ENCODE measurements at regions of chr12 and their contacts with region 1.

Region 1: GRCh38 chr12:54993161-54993835 is 8.7 kb upstream of the TESPA1 start:
- DNase-seq: no peak
- ATAC-seq: peak; percentile 61

Region 2: GRCh38 chr12:55034218-55034617 is 40.9 kb after region 1 on chr12:
- intact Hi-C with region 1: no loop called
- DNase-seq: no peak
- ATAC-seq: no peak

Region 3: DNA sequence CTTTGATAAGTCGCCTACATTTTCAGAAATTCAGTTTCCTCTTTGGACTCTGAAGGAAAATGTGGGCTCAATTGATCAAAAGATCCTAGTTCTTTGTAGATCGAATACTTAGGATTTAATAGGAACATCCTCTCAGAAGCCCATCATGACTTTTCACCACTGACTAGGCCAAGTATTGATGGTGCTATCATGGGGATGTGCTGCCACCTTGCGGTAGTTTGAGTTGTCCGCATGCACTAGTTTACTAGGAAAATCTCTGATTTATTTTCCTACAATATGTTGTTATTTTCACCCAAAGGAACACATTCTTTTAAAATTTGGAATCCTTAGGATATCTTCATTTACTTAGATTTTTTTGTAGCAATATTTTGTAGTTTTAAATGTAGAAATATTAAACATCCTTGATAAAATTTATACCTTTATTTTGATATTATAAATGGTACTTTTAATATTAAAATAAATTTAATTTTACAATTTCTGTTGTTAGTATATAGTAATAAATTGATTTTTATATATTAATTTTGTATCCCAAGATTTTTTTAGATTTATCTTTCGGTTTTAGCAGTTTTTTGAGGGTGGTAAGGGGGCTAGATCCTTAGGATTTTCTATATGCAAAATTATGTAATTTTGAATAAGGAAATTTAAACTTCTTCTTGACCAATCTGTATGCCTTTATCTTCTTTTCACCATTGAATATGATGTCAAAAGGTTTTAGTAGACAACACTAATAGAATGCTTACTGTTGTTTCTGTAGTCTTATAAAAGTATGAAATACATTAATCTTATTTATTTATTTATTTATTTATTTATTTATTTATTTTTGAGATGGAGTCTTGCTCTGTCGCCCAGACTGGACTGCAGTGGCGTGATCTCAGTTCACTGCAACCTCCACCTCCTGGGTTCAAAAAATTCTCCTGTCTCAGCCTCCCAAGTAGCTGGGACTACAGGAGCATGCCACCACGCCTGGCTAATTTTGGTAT is 80.0 kb after region 1 on chr12:
- intact Hi-C with region 1: loop called (anchors 1 kb)
- DNase-seq: peak; percentile 71
- ATAC-seq: peak; percentile 72